CD4-positive, alpha-beta T cell (primary cell): ENCODE measurements at regions of chr6 and their contacts with region 1.

Region 1: DNA sequence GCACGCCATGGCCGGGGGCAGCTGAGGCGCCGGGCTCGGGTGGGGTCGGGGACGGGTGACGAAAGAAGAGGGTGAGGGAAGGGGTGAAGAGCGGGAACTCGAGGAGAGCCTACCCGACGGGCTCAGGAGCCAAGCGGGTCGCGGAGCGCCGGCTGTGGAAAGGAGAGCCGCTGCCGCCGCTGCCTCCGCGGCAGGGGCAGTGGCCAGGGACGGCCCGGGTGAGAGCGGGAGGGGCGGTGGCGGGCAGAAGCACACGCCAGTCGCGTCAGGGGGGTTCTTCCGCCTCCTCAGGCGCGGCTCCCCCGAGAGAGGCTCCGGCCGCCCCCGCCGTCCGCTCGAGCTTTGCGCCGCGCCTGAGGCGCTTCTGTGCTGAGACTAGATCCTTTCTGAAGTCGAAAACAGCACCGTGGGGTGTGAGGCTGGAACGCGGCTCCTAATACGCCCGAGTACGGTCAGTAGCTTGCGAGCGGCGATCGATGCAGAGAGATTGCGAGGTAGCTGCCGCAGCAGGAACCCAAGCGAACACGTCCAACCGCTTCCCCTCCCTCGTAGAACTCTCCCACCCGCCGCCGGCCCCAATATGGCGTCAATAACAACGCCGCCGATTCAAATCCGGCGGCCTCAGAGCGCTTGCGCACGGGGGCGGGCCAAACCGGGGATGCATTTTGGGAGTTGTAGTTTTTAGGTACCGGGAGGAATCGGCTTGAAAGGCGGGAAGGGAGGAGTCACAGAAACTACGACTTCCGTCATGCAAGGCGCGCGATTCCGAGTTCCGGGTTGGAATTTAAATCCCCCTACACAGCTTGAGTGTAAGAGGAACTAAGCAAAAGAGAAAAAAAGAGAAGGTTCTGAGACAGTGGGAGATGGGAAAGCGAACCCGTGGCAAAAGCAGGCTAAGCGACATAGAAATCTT is at the start of gene AKIRIN2:
- DNase-seq: peak; percentile 92 to 99 (median 96)
- ATAC-seq: peak; percentile 81
- H3K4me3 ChIP-seq: peak within 1 kb of the TSS; percentile 95
- H3K4me3 Mint-ChIP-seq: peak within 1 kb of the TSS; percentile 93
- H3K27ac ChIP-seq: peak within 1 kb of the TSS; percentile 87 to 90
- H3K27ac Mint-ChIP-seq: peak within 1 kb of the TSS; percentile 90
- H3K4me1 ChIP-seq: peaks cover 5% of the 10 kb centered on the region
- H3K4me1 Mint-ChIP-seq: peaks cover 46% of the 10 kb centered on the region
- H3K27me3 ChIP-seq: no peaks in the 10 kb centered on the region
- H3K27me3 Mint-ChIP-seq: no peaks in the 10 kb centered on the region
- CTCF ChIP-seq: no peak
- total RNA-seq, gene AKIRIN2: 91.0 to 92.5 TPM

Region 2: DNA sequence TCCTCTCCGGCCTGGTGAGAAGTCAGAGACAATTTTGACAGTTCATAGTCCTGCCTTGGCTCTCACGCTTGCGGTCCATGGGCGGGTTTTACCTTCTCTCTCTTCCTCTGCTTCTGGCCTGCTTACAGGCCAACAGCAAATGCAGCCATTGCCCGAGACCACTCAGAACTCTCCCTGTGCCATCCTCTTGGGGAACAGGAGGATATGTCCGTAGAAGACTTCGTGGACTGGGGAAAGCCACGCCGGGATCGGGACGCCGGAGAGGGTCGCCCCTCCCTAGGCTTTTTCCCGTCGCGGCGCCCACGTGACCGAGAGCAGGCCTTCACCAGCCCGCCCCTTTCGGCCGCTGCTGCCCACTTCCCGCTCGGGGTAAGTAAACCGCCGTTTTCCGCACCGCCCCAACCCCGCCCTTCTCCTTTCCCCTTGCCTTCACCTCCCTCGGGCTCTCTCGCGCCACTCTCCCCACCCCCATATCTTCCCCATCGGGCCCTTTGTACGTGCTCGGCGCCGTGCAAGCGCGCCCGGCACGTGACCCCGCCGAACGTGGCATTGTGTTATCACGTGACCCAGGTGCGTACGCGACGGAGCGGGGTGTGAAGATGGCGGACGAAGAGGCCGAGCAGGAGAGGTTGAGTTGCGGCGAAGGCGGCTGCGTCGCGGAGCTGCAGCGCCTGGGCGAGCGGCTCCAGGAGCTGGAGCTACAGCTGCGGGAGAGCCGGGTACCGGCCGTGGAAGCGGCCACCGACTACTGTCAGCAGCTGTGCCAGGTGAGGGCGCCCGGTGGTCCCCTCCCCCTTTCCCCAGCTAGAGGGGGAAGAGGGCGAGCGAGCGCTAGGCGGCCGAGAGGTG is 546.7 kb before region 1 on chr6 and contains the start of gene ZNF292:
- CTCF ChIA-PET with region 1: no interaction called
- POLR2A ChIA-PET with region 1: interaction called, 9 read pairs
- intact Hi-C with region 1: loop called in 1 of 2 experiments (anchors 5 kb)
- DNase-seq: peak; percentile 87 to 98 (median 92)
- ATAC-seq: peak; percentile 71
- H3K4me3 ChIP-seq: peak within 1 kb of the TSS; percentile 86
- H3K4me3 Mint-ChIP-seq: peak within 1 kb of the TSS; percentile 92
- H3K27ac ChIP-seq: peak within 1 kb of the TSS; percentile 95 to 96
- H3K27ac Mint-ChIP-seq: peak within 1 kb of the TSS; percentile 88
- H3K4me1 ChIP-seq: peaks cover 50% of the 10 kb centered on the region
- H3K4me1 Mint-ChIP-seq: peaks cover 62% of the 10 kb centered on the region
- H3K27me3 ChIP-seq: no peaks in the 10 kb centered on the region
- H3K27me3 Mint-ChIP-seq: no peaks in the 10 kb centered on the region
- CTCF ChIP-seq: no peak
- total RNA-seq, gene ZNF292: 81.5 to 82.5 TPM

Region 3: GRCh38 chr6:87391334-87391733 is 310.6 kb before region 1 on chr6:
- CTCF ChIA-PET with region 1: no interaction called
- POLR2A ChIA-PET with region 1: no interaction called
- intact Hi-C with region 1: no loop called
- DNase-seq: no peak
- ATAC-seq: no peak
- H3K4me3 ChIP-seq: no peak overlapping the region
- H3K4me3 Mint-ChIP-seq: no peak overlapping the region
- H3K27ac ChIP-seq: no peak overlapping the region
- H3K27ac Mint-ChIP-seq: no peak overlapping the region
- H3K4me1 ChIP-seq: no peaks in the 10 kb centered on the region
- H3K4me1 Mint-ChIP-seq: no peaks in the 10 kb centered on the region
- H3K27me3 ChIP-seq: no peaks in the 10 kb centered on the region
- H3K27me3 Mint-ChIP-seq: no peaks in the 10 kb centered on the region
- CTCF ChIP-seq: no peak

Region 4: GRCh38 chr6:87407901-87408720 is 293.8 kb before region 1 on chr6 and contains the start of gene CFAP206:
- CTCF ChIA-PET with region 1: no interaction called
- POLR2A ChIA-PET with region 1: no interaction called
- intact Hi-C with region 1: loop called in 1 of 2 experiments (anchors 2 kb)
- DNase-seq: peak; percentile 63 to 93 (median 77)
- ATAC-seq: peak; percentile 79
- H3K4me3 ChIP-seq: peak within 1 kb of the TSS; percentile 92
- H3K4me3 Mint-ChIP-seq: peak within 1 kb of the TSS; percentile 92
- H3K27ac ChIP-seq: peak within 1 kb of the TSS; percentile 58 to 59
- H3K27ac Mint-ChIP-seq: peak within 1 kb of the TSS; percentile 64
- H3K4me1 ChIP-seq: peaks cover 3% of the 10 kb centered on the region
- H3K4me1 Mint-ChIP-seq: peaks cover 7% of the 10 kb centered on the region
- H3K27me3 ChIP-seq: peaks cover 0 to 3% of the 10 kb centered on the region in 2 experiments
- H3K27me3 Mint-ChIP-seq: peaks cover 30% of the 10 kb centered on the region
- CTCF ChIP-seq: no peak
- total RNA-seq, gene CFAP206: 0.11 TPM in 1 of 2 experiments, not detected in the other

Region 5: DNA sequence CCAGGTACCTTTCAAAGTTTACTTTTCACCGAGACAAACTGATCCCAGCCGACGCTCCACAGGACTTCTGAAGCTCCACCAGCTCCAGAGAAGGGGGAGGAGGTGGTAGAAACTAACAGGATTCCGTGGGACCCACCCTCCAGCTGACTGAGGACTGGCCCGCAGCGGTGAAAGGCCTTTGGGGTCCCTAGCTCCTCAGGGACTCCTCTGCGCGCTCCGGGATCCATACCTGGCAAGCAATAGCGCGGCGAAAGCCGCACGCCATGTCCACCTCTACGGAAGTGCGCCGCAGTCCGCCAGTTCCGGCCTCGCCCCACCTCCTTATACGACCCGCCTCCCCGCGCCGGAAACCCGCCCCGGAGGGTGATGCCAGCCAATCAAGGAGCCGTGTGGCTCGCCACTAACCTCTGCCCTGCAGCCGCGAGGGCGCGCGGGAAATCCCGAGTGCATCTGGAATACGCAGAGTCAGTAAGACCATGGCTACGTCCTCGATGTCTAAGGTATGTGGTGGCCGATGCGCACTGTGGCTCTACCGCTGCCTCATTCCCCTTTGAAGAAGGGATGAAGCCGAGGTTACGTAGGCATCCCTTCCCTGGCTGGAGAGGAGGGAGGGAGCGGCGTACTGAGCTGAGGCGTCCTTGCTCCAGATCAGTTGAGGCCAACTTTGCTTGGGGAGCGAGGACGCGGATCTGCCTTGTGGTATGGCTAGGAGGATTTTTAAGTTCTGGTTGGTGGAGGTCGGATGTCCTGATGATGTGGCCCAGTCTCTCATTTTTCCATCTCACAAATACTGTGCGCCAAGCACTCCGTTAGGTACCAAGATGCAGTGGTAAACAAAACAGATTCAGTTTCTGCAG is 112.0 kb before region 1 on chr6 and contains the starts of genes ORC3 and RARS2:
- CTCF ChIA-PET with region 1: no interaction called
- POLR2A ChIA-PET with region 1: interaction called, 23 read pairs
- intact Hi-C with region 1: loop called (anchors 1 to 2 kb)
- DNase-seq: peak; percentile 88 to 96 (median 92)
- ATAC-seq: peak; percentile 98
- H3K4me3 ChIP-seq: peak within 1 kb of the TSS; percentile 68
- H3K4me3 Mint-ChIP-seq: peak within 1 kb of the TSS; percentile 89
- H3K27ac ChIP-seq: peak within 1 kb of the TSS; percentile 76 to 80
- H3K27ac Mint-ChIP-seq: peak within 1 kb of the TSS; percentile 87
- H3K4me1 ChIP-seq: peaks cover 37% of the 10 kb centered on the region
- H3K4me1 Mint-ChIP-seq: peaks cover 74% of the 10 kb centered on the region
- H3K27me3 ChIP-seq: no peaks in the 10 kb centered on the region
- H3K27me3 Mint-ChIP-seq: no peaks in the 10 kb centered on the region
- CTCF ChIP-seq: no peak
- total RNA-seq, gene ORC3: 12.1 to 12.9 TPM
- total RNA-seq, gene RARS2: 21.9 to 22.4 TPM

Region 6: DNA sequence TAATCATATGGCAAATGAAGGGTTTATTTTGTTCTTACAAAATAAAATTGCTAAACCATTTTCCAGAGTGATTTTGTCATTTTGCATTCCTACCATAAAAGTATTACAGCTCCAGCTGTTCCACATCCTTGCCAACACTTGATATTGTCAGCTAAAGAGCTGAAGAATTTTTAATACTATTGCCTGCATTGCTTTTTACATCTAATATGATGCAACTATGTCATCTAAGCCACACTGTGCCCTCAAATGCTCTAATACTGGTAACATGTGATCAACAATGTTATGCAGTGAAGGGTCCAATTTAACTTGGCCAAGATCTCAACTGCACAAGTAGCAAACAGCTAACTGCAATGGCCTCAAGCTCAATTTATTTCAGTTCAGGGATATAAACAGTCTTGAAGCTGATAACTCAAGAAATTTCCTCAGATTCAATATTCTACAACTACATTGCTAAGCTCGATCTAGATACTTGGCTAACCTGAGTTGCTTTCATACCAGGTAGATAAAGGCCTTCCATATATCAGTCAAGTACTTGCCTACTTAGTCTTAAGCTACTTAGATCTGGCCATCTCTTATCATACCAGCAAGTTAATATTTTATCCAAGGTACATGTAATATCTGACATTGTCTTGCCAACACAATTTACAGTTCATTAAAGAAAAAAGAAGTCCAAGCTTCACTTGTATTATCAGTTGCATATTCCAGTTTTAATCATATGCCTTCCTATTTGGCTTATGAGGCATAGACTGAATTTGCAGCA is 16.9 kb before region 1 on chr6:
- CTCF ChIA-PET with region 1: no interaction called
- POLR2A ChIA-PET with region 1: interaction called, 20 read pairs
- intact Hi-C with region 1: no loop called
- DNase-seq: no peak
- ATAC-seq: no peak
- H3K4me3 ChIP-seq: no peak overlapping the region
- H3K4me3 Mint-ChIP-seq: no peak overlapping the region
- H3K27ac ChIP-seq: no peak overlapping the region
- H3K27ac Mint-ChIP-seq: peak overlapping the region; percentile 62
- H3K4me1 ChIP-seq: peaks cover 34% of the 10 kb centered on the region
- H3K4me1 Mint-ChIP-seq: peaks cover 73% of the 10 kb centered on the region
- H3K27me3 ChIP-seq: no peaks in the 10 kb centered on the region
- H3K27me3 Mint-ChIP-seq: no peaks in the 10 kb centered on the region
- CTCF ChIP-seq: no peak

Region 7: DNA sequence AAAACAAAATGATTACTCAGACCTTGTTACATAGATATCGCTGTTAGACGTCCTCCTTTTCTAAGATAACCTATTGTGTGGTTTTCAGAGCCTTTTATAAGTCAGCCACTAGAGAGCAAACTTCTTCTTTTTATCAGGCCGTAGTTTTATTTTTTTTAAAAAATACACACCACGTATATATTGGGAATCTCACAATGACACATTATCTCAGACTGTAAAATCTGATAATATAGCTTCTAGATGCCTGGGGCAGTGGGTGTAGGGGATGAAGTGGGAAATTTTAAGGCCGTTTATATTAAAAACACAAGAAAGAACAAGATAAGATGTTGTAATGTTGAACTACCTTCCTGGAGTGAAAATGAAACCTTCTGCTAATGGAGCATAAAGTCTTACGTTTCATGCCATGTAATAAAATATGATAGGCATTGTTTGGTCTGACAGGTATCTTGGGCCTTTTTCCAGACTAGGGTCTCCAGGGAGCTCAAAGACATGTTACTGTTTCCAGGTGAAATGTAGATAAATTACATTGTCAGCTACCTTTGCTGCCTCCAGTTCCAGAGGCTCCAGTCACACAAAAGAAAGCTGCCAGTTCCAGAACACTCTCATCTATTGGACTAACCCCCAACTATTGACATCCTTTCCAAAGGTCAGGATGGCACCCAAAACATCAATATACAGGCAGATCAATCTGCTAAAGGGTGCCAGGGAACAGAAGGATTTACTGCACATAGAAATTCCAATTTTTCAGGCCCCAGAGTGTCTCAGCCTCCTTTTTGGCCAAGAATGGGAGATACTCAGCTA is 130.3 kb after region 1 on chr6:
- CTCF ChIA-PET with region 1: no interaction called
- POLR2A ChIA-PET with region 1: interaction called, 11 read pairs
- intact Hi-C with region 1: no loop called
- DNase-seq: peak in 4 of 14 experiments; percentile 5 to 54 (median 48)
- ATAC-seq: peak; percentile 61
- H3K4me3 ChIP-seq: peak overlapping the region; percentile 60
- H3K4me3 Mint-ChIP-seq: peak overlapping the region; percentile 90
- H3K27ac ChIP-seq: peak overlapping the region in 1 of 2 donors; percentile 67
- H3K27ac Mint-ChIP-seq: peak overlapping the region; percentile 74
- H3K4me1 ChIP-seq: peaks cover 5% of the 10 kb centered on the region
- H3K4me1 Mint-ChIP-seq: peaks cover 13% of the 10 kb centered on the region
- H3K27me3 ChIP-seq: no peaks in the 10 kb centered on the region
- H3K27me3 Mint-ChIP-seq: no peaks in the 10 kb centered on the region
- CTCF ChIP-seq: peak; percentile 49